Naive thymus-derived CD8-positive, alpha-beta T cell (primary cell): ENCODE measurements at regions of chr6 and their contacts with region 1.

Region 1: DNA sequence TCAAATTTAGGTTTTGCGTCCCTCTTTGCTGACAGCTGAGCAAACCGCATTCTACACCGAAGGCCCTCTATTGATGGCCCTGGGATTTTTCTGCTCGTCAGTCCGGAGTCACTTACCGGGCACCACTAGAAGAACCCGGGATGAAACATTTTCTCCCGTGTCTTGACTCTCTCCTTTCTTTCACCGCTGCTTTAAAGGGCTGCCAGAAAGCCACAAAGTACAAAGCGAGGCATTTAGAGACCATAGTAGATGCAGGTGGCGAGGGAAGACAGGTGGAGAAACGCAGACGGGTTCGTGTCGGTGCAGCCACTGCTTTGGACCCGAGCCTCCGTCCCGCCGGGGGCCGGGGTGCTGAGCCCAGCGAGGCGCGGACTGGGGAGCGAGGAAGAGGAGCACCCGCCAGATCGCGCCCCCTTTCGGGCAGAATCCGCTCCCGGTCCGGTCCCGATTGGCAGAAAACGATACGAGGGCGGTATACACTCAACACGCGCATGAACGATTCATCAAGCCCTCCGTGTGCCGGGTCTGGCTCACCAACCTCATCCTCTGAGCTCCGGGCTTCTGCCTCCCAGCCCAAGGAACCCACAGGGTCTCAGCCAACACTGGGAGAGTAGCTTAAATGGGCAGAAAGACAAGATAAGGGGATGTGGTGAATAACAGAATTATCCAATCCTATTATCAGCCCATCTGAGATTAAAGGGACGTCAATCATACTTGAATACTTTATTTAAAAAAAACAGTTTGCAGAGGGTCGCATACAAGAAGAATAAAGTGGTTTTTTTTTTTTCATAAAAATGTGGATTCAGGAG is 84.9 kb downstream of the TRIM27 start:
- DNase-seq: peak; percentile 66 to 92 (median 81)
- ATAC-seq: peak; percentile 74 to 76
- H3K4me3 Mint-ChIP-seq: peak overlapping the region; percentile 92 to 99 (median 96)
- H3K27ac Mint-ChIP-seq: peak overlapping the region; percentile 90 to 98 (median 92)
- H3K4me1 Mint-ChIP-seq: peaks cover 12 to 28% (median 19%) of the 10 kb centered on the region in 4 donors
- H3K27me3 Mint-ChIP-seq: peaks cover 7 to 34% (median 13%) of the 10 kb centered on the region in 5 donors

Region 2: GRCh38 chr6:28856620-28857005 is 17.8 kb after region 1 on chr6:
- POLR2A ChIA-PET with region 1: no interaction called
- DNase-seq: no peak
- ATAC-seq: no peak
- H3K4me3 Mint-ChIP-seq: no peak overlapping the region
- H3K27ac Mint-ChIP-seq: no peak overlapping the region
- H3K4me1 Mint-ChIP-seq: peaks cover 4 to 6% (median 5%) of the 10 kb centered on the region in 4 donors
- H3K27me3 Mint-ChIP-seq: peaks cover 0 to 7% (median 0%) of the 10 kb centered on the region in 5 donors

Region 3: DNA sequence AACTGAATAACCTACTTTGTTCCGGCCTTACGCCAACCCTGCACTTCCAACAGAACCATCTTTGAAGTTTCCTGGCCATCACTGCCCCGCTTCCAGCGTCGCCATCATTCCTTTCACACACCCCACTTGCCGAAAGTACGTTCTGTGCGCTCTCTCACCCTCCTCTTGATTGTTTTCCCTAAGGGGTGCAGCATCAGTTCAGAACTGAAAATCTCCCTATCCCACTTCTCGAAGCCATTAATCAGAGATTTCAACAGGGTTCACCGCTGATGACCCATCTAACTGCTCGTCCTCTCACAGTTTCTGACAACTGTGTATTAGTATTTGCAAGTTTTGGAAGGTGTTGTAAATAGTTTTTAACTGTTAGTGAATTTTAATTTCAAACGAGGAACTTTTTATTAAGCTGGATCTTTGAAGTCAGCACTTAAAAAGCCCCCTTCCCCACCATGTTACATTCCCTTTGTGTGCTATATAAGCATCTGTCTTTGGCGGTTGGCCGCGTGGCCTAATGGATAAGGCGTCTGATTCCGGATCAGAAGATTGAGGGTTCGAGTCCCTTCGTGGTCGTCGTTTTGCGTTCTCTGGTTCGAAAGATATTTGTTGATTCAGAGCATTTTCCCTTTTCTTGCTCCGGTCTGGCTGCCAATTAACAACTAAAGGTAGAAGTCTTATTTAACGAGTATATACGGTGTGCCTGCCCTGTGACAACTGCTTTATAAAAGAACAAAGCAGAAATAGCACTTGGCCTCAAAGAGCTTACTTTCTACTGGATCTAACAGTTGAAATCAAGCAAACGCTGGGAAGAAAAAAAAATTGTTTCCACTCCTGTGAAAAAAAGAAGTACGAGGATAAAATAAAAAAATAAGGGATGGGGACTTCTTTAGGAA is 42.3 kb after region 1 on chr6:
- POLR2A ChIA-PET with region 1: interaction called, 19 read pairs
- DNase-seq: peak in 9 of 10 donors; percentile 39 to 77 (median 67)
- ATAC-seq: no peak
- H3K4me3 Mint-ChIP-seq: peak overlapping the region; percentile 80 to 93 (median 87)
- H3K27ac Mint-ChIP-seq: peak overlapping the region; percentile 67 to 98 (median 88)
- H3K4me1 Mint-ChIP-seq: peaks cover 16 to 54% (median 42%) of the 10 kb centered on the region in 4 donors
- H3K27me3 Mint-ChIP-seq: peaks cover 0 to 10% (median 0%) of the 10 kb centered on the region in 5 donors

Region 4: DNA sequence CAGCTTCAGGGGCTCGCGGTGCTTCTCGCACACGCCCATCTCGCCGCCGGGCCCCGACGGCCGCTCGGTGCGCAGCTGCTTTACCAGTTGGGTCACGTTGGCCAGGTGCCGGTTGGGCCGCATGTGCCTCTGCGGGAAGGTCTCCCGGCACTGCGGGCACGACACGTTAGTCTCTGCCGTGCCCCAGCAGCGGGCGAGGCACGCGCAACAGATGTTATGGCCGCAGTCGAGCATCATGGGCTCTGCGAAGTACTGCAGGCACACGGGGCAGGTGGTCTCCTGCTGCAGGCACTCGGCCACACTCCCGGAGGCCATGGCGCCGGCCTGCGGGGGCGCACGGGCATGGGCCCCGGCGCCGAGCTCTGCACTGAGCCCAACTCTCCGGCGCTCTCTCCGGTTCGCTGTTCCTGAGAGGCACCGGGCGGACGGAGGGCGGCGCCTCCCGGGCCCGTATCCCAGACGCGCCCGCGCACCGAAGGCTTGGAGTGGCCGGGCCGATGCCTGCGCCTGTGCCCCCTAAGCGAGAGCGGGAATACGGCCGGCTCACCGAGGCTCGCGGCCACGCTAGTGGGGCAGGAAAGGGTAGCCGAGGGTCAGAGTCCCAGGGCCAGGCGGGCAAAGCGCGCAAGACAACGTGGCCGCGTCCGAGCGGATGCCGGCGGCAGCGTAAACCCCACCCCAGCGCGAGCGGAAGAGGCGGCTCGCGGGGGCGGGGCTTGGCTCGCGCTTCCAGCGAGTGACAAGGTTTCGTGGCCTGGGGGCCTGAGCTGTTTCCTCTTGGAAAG is 84.7 kb after region 1 on chr6 and contains the start of gene TRIM27:
- POLR2A ChIA-PET with region 1: interaction called, 18 read pairs
- DNase-seq: peak; percentile 57 to 83 (median 78)
- ATAC-seq: peak; percentile 78 to 80
- H3K4me3 Mint-ChIP-seq: peak within 1 kb of the TSS; percentile 86 to 98 (median 94)
- H3K27ac Mint-ChIP-seq: peak within 1 kb of the TSS; percentile 89 to 96 (median 94)
- H3K4me1 Mint-ChIP-seq: peaks cover 7 to 47% (median 40%) of the 10 kb centered on the region in 4 donors
- H3K27me3 Mint-ChIP-seq: no peaks in the 10 kb centered on the region
- polyA plus RNA-seq, gene TRIM27: 37.5 to 71.3 (median 44.2) TPM

Region 5: DNA sequence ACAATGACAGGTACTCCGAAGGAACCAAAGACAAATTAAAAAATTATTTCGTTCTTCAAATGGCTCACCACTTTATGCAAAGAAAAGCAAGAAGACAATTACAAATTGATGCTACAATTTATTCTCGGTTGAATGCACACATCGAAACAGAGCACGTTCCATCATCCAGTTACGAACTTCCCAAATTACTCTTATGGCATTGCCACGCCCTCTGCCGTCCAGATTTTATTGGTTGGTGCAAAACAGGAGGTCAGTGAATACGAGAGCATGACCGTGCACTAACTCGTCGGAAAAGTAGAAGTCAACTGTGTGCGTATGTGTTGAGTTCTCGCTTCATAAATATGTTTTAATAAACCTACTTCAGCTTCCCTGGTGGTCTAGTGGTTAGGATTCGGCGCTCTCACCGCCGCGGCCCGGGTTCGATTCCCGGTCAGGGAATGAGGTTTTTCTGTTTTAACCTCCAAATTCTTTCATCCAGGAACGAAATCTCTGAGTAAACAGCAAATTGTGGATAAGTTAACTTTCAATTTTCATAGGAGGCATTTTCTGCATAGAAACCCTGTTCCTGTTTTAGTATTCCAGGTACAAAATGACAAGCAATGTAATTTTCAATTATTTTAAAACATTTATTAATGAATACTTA is 143.1 kb after region 1 on chr6:
- POLR2A ChIA-PET with region 1: interaction called, 26 read pairs
- DNase-seq: peak; percentile 49 to 95 (median 76)
- ATAC-seq: peak; percentile 61 to 74
- H3K4me3 Mint-ChIP-seq: peak overlapping the region; percentile 79 to 97 (median 92)
- H3K27ac Mint-ChIP-seq: peak overlapping the region; percentile 86 to 100 (median 93)
- H3K4me1 Mint-ChIP-seq: peaks cover 31 to 76% (median 62%) of the 10 kb centered on the region in 4 donors
- H3K27me3 Mint-ChIP-seq: peaks cover 9 to 43% (median 31%) of the 10 kb centered on the region in 5 donors